Naive thymus-derived CD4-positive, alpha-beta T cell (primary cell): ENCODE measurements at regions of chr3 and their contacts with region 1.

Region 1: DNA sequence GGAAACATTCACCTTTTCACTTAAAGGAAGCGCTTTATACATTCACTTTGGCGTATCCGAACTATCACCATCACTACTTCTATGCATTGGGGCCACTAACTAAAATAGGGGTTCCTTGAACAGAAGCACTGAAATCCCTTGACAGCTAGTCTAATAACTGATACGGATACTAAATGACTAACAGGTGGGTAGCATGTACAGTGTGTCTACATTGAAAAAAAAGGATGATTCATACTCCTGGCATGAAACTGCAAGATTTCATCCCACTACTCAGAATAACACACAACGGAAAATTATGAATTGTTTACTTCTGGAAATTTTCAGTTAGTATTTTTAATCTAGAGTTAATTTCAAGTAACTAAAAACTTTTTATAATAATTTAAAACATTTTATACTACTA is 96.7 kb downstream of the SMARCC1 start:
- DNase-seq: no peak
- ATAC-seq: no peak
- H3K4me3 ChIP-seq: no peak overlapping the region
- H3K4me3 Mint-ChIP-seq: no peak overlapping the region
- H3K27ac ChIP-seq: no peak overlapping the region
- H3K27ac Mint-ChIP-seq: no peak overlapping the region
- H3K4me1 ChIP-seq: no peaks in the 10 kb centered on the region
- H3K4me1 Mint-ChIP-seq: peaks cover 0 to 3% (median 0%) of the 10 kb centered on the region in 7 donors
- H3K27me3 ChIP-seq: no peaks in the 10 kb centered on the region
- H3K27me3 Mint-ChIP-seq: no peaks in the 10 kb centered on the region

Region 2: GRCh38 chr3:47404955-47405790 is 279.9 kb before region 1 on chr3:
- CTCF ChIA-PET with region 1: no interaction called
- POLR2A ChIA-PET with region 1: no interaction called
- intact Hi-C with region 1: no loop called
- DNase-seq: no peak
- ATAC-seq: no peak
- H3K4me3 ChIP-seq: no peak overlapping the region
- H3K4me3 Mint-ChIP-seq: no peak overlapping the region
- H3K27ac ChIP-seq: peak overlapping the region; percentile 1
- H3K27ac Mint-ChIP-seq: peak overlapping the region in 1 of 9 donors; percentile 9
- H3K4me1 ChIP-seq: no peaks in the 10 kb centered on the region
- H3K4me1 Mint-ChIP-seq: peaks cover 0 to 7% (median 0%) of the 10 kb centered on the region in 7 donors
- H3K27me3 ChIP-seq: no peaks in the 10 kb centered on the region
- H3K27me3 Mint-ChIP-seq: no peaks in the 10 kb centered on the region

Region 3: GRCh38 chr3:47652142-47652541 is 32.9 kb before region 1 on chr3:
- CTCF ChIA-PET with region 1: no interaction called
- POLR2A ChIA-PET with region 1: no interaction called
- intact Hi-C with region 1: loop called in 1 of 2 experiments (anchors 5 kb)
- DNase-seq: no peak
- ATAC-seq: no peak
- H3K4me3 ChIP-seq: no peak overlapping the region
- H3K4me3 Mint-ChIP-seq: no peak overlapping the region
- H3K27ac ChIP-seq: no peak overlapping the region
- H3K27ac Mint-ChIP-seq: no peak overlapping the region
- H3K4me1 ChIP-seq: no peaks in the 10 kb centered on the region
- H3K4me1 Mint-ChIP-seq: peaks cover 0 to 4% (median 3%) of the 10 kb centered on the region in 7 donors
- H3K27me3 ChIP-seq: no peaks in the 10 kb centered on the region
- H3K27me3 Mint-ChIP-seq: no peaks in the 10 kb centered on the region